Panc1 (cell line): ENCODE measurements at regions of chr6 and their contacts with region 1.

Region 1: DNA sequence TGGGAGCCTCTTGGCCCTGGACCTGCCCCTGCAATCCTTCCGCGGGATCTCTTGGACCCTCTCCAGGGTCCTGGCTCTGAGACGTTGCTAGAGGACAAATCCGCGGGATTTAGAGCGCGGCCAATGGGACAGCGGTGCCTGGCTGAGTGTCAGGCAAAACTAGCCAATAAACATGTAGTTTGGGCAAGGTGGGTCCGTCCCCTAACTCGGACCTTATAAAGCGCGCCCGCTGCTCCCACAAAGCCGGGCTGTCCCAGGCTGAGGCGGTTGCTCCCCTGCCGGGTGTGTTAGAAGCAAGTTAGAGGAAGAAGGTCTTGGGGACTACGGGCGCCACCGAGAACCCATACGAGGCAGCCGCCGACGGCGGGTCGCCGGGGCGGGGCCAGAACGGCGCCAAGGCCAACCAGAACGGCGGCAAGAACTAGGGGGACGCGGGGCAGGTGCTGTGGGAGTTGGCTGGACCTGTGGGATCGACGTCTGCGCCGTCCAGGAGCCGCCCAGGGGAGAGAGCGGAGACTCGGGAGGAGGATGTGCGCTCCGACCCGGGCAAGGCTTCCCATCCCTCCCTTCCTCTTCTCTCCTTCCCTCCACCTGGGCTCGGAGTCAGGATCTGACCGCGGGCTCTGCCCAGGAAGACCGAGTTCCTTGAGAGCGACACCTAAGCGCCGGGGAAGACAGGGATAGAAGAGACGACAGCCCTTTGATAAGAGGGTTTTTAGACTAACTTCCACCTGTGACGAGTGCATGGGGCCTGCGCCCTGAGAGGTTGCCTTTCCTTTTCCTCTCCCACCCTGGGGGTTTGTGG is 6.5 kb upstream of the TMEM14A start:
- DNase-seq: peak; percentile 80
- ATAC-seq: peak; percentile 97
- H3K4me3 ChIP-seq: peak overlapping the region; percentile 82 to 84
- H3K27ac ChIP-seq: peak overlapping the region; percentile 92
- H3K4me1 ChIP-seq: peaks cover 17% of the 10 kb centered on the region
- H3K27me3 ChIP-seq: no peaks in the 10 kb centered on the region
- CTCF ChIP-seq: no peak

Region 2: DNA sequence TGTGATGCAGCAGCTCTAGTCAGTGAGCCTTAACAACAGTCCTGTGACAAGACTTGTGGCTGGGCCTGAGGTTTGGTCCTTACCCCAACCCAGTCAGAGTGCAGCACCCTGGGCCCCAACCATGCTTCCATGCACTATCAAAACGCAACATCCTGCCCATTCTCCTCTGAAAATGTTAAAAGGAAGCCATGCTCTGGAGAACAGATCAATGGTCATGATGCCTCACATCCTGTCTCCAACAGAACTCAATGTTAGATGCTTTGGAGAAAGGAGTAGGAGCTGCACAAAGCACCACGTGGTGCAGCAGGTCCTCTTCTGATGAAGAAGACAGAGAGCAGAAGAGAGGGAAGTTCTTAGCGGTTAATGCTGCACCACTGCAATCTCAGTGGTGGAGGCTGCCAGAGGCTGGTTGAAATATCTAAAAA is 129.4 kb before region 1 on chr6:
- CTCF ChIA-PET with region 1: no interaction called
- POLR2A ChIA-PET with region 1: no interaction called
- in situ Hi-C with region 1: no loop called
- intact Hi-C with region 1: no loop called
- DNase-seq: no peak
- ATAC-seq: no peak
- H3K4me3 ChIP-seq: no peak overlapping the region
- H3K27ac ChIP-seq: no peak overlapping the region
- H3K4me1 ChIP-seq: peaks cover 37% of the 10 kb centered on the region
- H3K27me3 ChIP-seq: no peaks in the 10 kb centered on the region
- CTCF ChIP-seq: no peak

Region 3: GRCh38 chr6:52598123-52598823 is 66.1 kb before region 1 on chr6:
- CTCF ChIA-PET with region 1: no interaction called
- POLR2A ChIA-PET with region 1: no interaction called
- in situ Hi-C with region 1: no loop called
- intact Hi-C with region 1: loop called (anchors 5 kb)
- DNase-seq: no peak
- ATAC-seq: peak; percentile 86
- H3K4me3 ChIP-seq: peak overlapping the region; percentile 7 to 43
- H3K27ac ChIP-seq: peak overlapping the region; percentile 30
- H3K4me1 ChIP-seq: peaks cover 36% of the 10 kb centered on the region
- H3K27me3 ChIP-seq: no peaks in the 10 kb centered on the region
- CTCF ChIP-seq: peak; percentile 83